ENCODE measurements at regions of chr1 and their contacts with region 1.

Region 1: DNA sequence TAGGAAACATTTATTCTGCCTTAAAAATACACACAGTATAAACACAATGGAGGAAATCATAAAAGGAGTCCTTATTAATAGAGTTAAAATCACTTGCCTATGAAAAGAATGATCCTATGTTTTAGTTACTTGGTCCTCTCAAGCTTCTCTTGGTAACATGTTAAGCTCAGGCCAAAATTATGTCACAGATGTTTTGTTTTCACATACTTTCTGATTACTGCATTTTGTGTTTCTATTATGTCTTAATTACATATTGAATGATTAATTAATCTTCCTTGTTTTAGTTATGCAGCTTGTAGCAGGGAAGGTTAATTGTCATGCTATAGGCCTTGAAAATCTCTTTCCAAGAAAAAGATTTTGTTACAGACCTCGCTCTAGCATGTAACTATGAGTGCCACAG is 406.0 kb downstream of the PLA2G4A start:
- DNase-seq: no peak

Region 2: GRCh38 chr1:187185396-187185795 is 49.3 kb before region 1 on chr1:
- intact Hi-C with region 1: loop called in 1 of 2 experiments (anchors 2 kb)
- DNase-seq: no peak